MCF 10A (cell line): ENCODE measurements at regions of chr20 and their contacts with region 1.

Region 1: GRCh38 chr20:1474825-1475603 is 8.4 kb upstream of the NSFL1C start:
- DNase-seq: peak; percentile 92
- H3K4me3 Mint-ChIP-seq: no peak overlapping the region
- H3K27ac Mint-ChIP-seq: peak overlapping the region; percentile 69
- H3K4me1 Mint-ChIP-seq: peaks cover 43% of the 10 kb centered on the region
- H3K27me3 Mint-ChIP-seq: no peaks in the 10 kb centered on the region
- CTCF ChIP-seq: no peak

Region 2: DNA sequence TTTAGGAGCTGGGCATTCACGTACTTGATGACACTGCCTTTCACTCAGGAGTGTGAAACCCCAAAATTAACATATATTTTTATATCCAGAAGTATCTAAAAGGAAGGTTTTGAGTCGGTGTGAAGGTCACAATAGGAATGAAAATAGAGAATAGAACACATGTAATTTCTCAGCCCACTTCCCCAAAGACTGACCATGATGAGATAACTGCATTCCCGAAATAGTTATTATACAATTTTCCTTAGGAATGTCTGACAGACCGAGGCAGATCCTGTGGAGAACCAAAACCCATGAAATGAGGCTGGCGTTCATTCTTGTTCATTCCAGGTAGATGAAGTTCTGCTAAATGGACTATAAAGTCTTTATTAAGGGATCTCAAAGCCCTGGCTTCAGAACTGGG is 18.7 kb before region 1 on chr20:
- CTCF ChIA-PET with region 1: no interaction called
- POLR2A ChIA-PET with region 1: no interaction called
- intact Hi-C with region 1: no loop called
- DNase-seq: no peak
- H3K4me3 Mint-ChIP-seq: no peak overlapping the region
- H3K27ac Mint-ChIP-seq: no peak overlapping the region
- H3K4me1 Mint-ChIP-seq: no peaks in the 10 kb centered on the region
- H3K27me3 Mint-ChIP-seq: no peaks in the 10 kb centered on the region
- CTCF ChIP-seq: no peak

Region 3: GRCh38 chr20:1491281-1491840 is 16.3 kb after region 1 on chr20 and contains the start of gene SIRPB2:
- CTCF ChIA-PET with region 1: interaction called, 46 read pairs
- POLR2A ChIA-PET with region 1: interaction called, 122 read pairs
- intact Hi-C with region 1: no loop called
- DNase-seq: no peak
- H3K4me3 Mint-ChIP-seq: peak within 1 kb of the TSS; percentile 12
- H3K27ac Mint-ChIP-seq: peak within 1 kb of the TSS; percentile 92
- H3K4me1 Mint-ChIP-seq: peaks cover 18% of the 10 kb centered on the region
- H3K27me3 Mint-ChIP-seq: no peaks in the 10 kb centered on the region
- CTCF ChIP-seq: no peak
- total RNA-seq, gene SIRPB2: 1.3 and 1.8 TPM in 2 replicates